SK-N-SH (cell line): ENCODE measurements at regions of chr2 and their contacts with region 1.

Region 1: GRCh38 chr2:88880441-88880953 is 189.0 kb downstream of the RPIA start:
- DNase-seq: peak; percentile 30
- H3K4me3 ChIP-seq: no peak overlapping the region; a peak in 1 of 4 replicates
- H3K27ac ChIP-seq: no peak overlapping the region
- H3K4me1 ChIP-seq: no peaks in the 10 kb centered on the region
- H3K27me3 ChIP-seq: peaks cover 12% of the 10 kb centered on the region; the same call in 1 of the 2 replicates
- CTCF ChIP-seq: peak; percentile 86
- EP300 ChIP-seq: no peak
- RAD21 ChIP-seq: peak; percentile 73

Region 2: DNA sequence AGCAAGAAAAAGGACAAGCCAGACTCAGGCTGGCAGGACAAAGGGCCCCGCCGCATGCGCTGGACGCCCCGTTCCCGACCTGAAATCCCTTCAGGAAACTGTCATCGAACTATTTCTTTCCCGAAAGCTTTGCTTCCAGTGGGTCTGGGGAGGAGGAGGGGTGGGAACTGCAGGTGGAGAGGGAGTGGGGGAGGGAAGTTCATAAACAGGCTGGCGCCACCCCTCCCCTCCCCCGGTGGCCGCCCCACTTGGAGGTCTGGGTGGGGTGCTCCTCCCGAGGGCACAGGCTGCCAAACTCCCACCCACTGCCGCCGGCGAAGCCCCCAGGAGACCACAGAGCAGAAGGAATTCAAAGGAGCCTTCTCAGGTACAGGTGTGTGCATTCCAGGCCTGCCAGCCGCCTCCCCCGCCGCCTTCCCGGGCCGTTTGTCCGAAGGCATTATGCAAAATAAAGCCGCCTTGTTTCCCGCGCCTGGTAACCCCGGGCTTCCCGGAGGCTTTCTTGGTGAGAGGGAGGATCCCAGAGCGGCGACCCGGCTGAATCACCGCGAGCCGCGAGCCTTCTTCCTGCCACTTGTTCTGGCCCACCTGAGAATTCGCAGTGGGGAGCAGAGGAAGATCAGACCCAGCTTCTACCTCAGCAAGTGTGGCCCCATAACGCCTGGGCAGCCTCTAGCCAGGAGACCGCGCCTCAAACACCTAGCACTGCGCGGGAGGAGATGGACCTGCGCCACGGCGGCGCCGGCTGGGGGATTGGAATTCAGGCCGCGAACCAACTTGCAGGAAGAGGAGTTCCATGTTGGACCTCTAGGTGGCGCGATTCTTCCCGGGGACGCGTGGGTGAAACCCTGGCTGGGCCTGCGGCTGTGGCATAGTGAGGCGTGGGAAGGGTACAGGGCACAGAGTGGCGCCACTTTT is 529.9 kb before region 1 on chr2:
- CTCF ChIA-PET with region 1: no interaction called
- POLR2A ChIA-PET with region 1: no interaction called
- DNase-seq: peak; percentile 79
- H3K4me3 ChIP-seq: peak overlapping the region; percentile 10 to 57; a peak in 3 of 4 replicates
- H3K27ac ChIP-seq: no peak overlapping the region
- H3K4me1 ChIP-seq: no peaks in the 10 kb centered on the region; a peak in 1 of 4 replicates
- H3K27me3 ChIP-seq: no peaks in the 10 kb centered on the region
- CTCF ChIP-seq: peak; percentile 62
- EP300 ChIP-seq: no peak
- RAD21 ChIP-seq: peak; percentile 57

Region 3: GRCh38 chr2:88857951-88858411 is 22.5 kb before region 1 on chr2:
- CTCF ChIA-PET with region 1: interaction called, 26 read pairs
- POLR2A ChIA-PET with region 1: no interaction called
- DNase-seq: no peak
- H3K4me3 ChIP-seq: no peak overlapping the region
- H3K27ac ChIP-seq: no peak overlapping the region
- H3K4me1 ChIP-seq: no peaks in the 10 kb centered on the region
- H3K27me3 ChIP-seq: peaks cover 22% of the 10 kb centered on the region; the same call in 1 of the 2 replicates
- CTCF ChIP-seq: no peak
- EP300 ChIP-seq: no peak
- RAD21 ChIP-seq: no peak

Region 4: DNA sequence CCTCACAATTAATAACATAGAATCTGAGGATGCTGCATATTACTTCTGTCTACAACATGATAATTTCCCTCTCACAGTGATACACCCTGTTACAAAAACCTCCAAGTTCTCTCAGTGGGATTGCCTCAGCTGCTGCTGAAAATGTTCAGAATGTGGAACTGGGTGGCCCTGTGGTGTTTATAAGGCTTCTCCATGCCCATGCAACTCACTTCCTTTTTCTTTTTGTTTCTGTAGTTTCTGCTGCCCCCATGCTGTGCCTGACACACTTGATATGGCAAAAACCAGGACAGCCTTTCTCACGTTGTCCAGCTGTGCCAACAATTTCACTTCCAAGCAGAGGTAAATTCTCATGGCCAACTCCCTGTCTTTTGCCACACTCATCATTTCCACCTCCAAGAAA is 17.2 kb after region 1 on chr2:
- CTCF ChIA-PET with region 1: interaction called, 36 read pairs
- POLR2A ChIA-PET with region 1: no interaction called
- DNase-seq: no peak
- H3K4me3 ChIP-seq: no peak overlapping the region
- H3K27ac ChIP-seq: no peak overlapping the region
- H3K4me1 ChIP-seq: no peaks in the 10 kb centered on the region
- H3K27me3 ChIP-seq: no peaks in the 10 kb centered on the region; the same call in 1 of the 2 replicates
- CTCF ChIP-seq: no peak
- EP300 ChIP-seq: no peak
- RAD21 ChIP-seq: no peak

Region 5: GRCh38 chr2:88903749-88904353 is 23.4 kb after region 1 on chr2:
- CTCF ChIA-PET with region 1: interaction called, 14 read pairs
- POLR2A ChIA-PET with region 1: no interaction called
- DNase-seq: peak; percentile 20
- H3K4me3 ChIP-seq: peak overlapping the region in 1 of 2 experiments; percentile 22; a peak in 1 of 4 replicates
- H3K27ac ChIP-seq: no peak overlapping the region
- H3K4me1 ChIP-seq: no peaks in the 10 kb centered on the region
- H3K27me3 ChIP-seq: no peaks in the 10 kb centered on the region
- CTCF ChIP-seq: peak; percentile 71
- EP300 ChIP-seq: no peak
- RAD21 ChIP-seq: peak; percentile 76